Activated naive CD4-positive, alpha-beta T cell treated with anti-CD3 and anti-CD28 coated beads for 36 hours (primary cell): ENCODE measurements at regions of chr6 and their contacts with region 1.

Region 1: GRCh38 chr6:44002593-44003344 is 124.5 kb downstream of the MRPL14 start:
- DNase-seq: peak; percentile 81
- H3K4me3 Mint-ChIP-seq: peak overlapping the region; percentile 89
- H3K27ac Mint-ChIP-seq: no peak overlapping the region
- H3K4me1 Mint-ChIP-seq: peaks cover 16% of the 10 kb centered on the region
- H3K27me3 Mint-ChIP-seq: peaks cover 27% of the 10 kb centered on the region

Region 2: GRCh38 chr6:43635387-43636307 is 367.1 kb before region 1 on chr6 and contains the start of gene MAD2L1BP:
- CTCF ChIA-PET with region 1: no interaction called
- intact Hi-C with region 1: loop called (anchors 1 kb)
- DNase-seq: peak; percentile 93
- H3K4me3 Mint-ChIP-seq: peak within 1 kb of the TSS; percentile 91
- H3K27ac Mint-ChIP-seq: peak within 1 kb of the TSS; percentile 95
- H3K4me1 Mint-ChIP-seq: peaks cover 46% of the 10 kb centered on the region
- H3K27me3 Mint-ChIP-seq: no peaks in the 10 kb centered on the region
- total RNA-seq, gene MAD2L1BP: 19.8 to 22.7 TPM

Region 3: DNA sequence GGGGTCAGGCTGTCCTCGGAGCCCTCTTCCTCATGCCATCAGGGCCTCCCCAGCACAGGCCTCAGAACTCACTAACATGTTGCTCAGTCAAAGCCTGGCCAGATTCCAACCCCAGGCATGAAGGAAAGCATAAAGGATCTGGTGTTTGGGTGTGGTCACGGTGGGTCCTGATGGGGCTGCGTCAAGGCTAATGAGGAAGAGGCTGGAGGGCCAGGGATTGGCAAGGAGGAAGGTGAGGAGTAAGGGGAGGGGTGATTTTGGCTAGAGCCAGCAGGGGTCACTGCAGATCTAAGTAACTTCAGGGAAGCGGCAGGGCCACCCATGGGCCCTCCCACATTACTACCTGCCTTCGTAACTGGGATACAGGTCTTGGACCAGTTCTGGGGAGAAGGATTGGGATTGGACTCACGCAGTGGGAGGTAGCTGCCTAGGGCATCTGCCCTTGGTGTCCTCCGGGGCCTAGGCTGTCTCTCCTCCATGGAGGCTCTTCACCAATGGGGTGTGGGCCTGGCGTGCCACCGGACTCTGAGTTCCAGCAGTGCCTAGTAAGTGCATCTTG is 279.0 kb before region 1 on chr6:
- CTCF ChIA-PET with region 1: no interaction called
- intact Hi-C with region 1: loop called (anchors 1 kb)
- DNase-seq: peak; percentile 90
- H3K4me3 Mint-ChIP-seq: peak overlapping the region; percentile 72
- H3K27ac Mint-ChIP-seq: no peak overlapping the region
- H3K4me1 Mint-ChIP-seq: peaks cover 23% of the 10 kb centered on the region
- H3K27me3 Mint-ChIP-seq: no peaks in the 10 kb centered on the region

Region 4: DNA sequence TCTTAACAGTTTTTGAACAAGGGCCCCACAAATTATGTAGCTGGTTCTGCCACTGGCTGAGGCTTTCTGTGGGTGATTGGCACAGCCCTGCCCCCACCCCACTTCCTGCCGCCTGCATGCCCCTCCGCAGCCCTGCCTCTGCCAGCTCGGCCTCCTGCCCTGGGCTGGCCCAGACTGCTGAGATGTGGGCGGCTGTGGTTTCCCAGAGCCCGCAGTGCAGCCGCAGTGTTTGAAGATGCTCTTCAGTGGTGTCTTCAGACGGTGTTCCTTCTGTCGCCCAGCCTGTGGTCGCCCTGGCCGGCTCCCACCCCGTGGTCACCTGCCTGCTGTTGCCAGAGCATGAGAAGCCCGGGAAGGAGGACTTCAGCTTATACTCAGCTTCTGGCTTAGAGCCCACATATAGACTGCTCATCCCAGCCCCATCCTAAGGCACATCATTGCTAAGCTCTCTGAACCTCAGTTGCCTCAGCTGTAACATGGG is 78.5 kb before region 1 on chr6:
- CTCF ChIA-PET with region 1: no interaction called
- intact Hi-C with region 1: loop called (anchors 2 kb)
- DNase-seq: peak; percentile 70
- H3K4me3 Mint-ChIP-seq: no peak overlapping the region
- H3K27ac Mint-ChIP-seq: no peak overlapping the region
- H3K4me1 Mint-ChIP-seq: peaks cover 40% of the 10 kb centered on the region
- H3K27me3 Mint-ChIP-seq: no peaks in the 10 kb centered on the region

Region 5: DNA sequence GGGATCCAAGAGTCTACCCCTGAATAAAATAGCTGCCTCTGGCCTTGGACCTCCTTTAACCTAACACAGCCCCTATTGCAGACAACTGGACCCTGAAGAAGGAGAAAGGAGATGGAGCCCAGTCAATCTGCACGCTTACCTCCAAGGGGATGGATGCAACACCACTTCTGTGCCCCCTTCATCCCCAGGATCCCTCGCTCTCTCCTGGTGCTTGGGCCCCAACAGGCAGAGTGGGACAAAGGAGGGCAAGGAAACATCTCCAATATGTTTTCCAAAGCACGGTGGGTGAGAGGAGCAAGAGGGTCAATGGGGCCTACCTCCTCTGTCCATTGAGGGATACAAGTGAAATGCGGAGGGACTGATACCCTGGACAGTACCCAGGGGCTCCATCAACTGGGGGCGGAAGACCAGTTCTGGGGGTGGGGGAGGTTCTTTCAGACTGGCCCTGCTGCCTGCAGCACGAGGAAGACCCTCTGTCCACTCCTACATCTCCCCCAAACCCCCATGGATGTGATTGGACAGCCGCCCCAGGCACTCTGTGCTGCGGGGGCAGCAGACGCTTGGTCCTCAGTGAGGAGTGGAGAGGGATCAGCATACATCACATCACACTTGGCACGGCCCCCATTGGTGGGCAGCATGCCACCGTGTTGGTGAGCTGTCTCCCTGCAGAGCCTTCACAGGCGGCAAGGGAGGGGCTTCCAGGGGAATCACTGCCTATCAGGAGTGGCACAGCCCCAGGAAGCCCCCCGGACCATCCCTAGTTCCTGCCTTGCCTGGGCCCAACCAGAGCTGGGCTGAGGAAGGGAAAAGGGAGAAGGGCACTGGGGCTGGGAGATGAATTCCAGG is 53.8 kb after region 1 on chr6:
- CTCF ChIA-PET with region 1: no interaction called
- intact Hi-C with region 1: no loop called
- DNase-seq: no peak
- H3K4me3 Mint-ChIP-seq: no peak overlapping the region
- H3K27ac Mint-ChIP-seq: no peak overlapping the region
- H3K4me1 Mint-ChIP-seq: peaks cover 2% of the 10 kb centered on the region
- H3K27me3 Mint-ChIP-seq: peaks cover 2% of the 10 kb centered on the region

Region 6: GRCh38 chr6:44127186-44128019 is 124.6 kb after region 1 on chr6 and contains the starts of genes MRPL14 and TMEM63B:
- CTCF ChIA-PET with region 1: no interaction called
- intact Hi-C with region 1: loop called (anchors 2 kb)
- DNase-seq: peak; percentile 86
- H3K4me3 Mint-ChIP-seq: peak within 1 kb of the TSS; percentile 88
- H3K27ac Mint-ChIP-seq: peak within 1 kb of the TSS; percentile 93
- H3K4me1 Mint-ChIP-seq: peaks cover 41% of the 10 kb centered on the region
- H3K27me3 Mint-ChIP-seq: no peaks in the 10 kb centered on the region
- total RNA-seq, gene MRPL14: 40.9 to 41.0 TPM
- total RNA-seq, gene TMEM63B: 7.8 to 8.3 TPM

Region 7: DNA sequence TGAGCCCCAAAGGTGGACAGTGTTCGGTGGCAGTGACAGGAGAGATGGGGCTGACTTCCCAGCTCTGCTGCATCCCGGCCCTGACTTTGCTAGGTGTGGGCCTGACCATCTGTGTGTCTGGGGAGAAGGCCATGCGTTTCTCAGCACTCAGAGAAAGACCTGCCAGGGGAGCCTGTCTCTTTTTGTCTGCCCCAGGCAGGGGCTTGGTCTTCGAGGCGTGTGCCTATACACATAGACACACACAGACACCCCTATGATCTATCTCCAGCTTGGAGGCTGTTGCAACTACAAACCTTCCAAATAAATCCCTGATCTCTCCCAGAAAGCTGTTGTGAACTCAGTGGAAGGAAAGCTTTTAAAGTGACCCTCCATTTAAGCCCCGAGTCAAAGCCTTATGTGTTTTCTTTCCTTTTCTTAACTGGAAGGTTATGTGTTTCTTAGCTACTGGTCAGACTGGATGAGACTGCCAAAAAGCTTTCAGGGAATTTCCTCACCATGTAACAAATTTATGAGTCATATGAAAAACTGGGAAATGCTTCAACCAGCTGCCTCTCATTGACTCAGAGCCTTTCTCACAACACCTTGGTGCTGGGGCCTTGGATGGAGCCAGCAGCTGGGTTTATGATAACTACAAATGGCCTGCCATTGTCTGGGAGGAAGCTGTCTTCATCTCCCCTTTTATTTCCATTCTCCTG is 487.3 kb after region 1 on chr6:
- CTCF ChIA-PET with region 1: no interaction called
- intact Hi-C with region 1: no loop called
- DNase-seq: no peak
- H3K4me3 Mint-ChIP-seq: no peak overlapping the region
- H3K27ac Mint-ChIP-seq: no peak overlapping the region
- H3K4me1 Mint-ChIP-seq: no peaks in the 10 kb centered on the region
- H3K27me3 Mint-ChIP-seq: peaks cover 7% of the 10 kb centered on the region